WTC11 (cell line): ENCODE measurements at regions of chr6 and their contacts with region 1.

Region 1: GRCh38 chr6:124795643-124796463 is 166.4 kb upstream of the RNF217 start:
- DNase-seq: peak; percentile 53
- ATAC-seq: peak; percentile 90
- H3K4me3 Mint-ChIP-seq: no peak overlapping the region
- H3K27ac Mint-ChIP-seq: no peak overlapping the region
- H3K4me1 Mint-ChIP-seq: peaks cover 12% of the 10 kb centered on the region
- H3K27me3 Mint-ChIP-seq: no peaks in the 10 kb centered on the region
- CTCF ChIP-seq: peak; percentile 45; the same call in 1 of the 2 replicates

Region 2: GRCh38 chr6:123849406-123849805 is 946.4 kb before region 1 on chr6:
- CTCF ChIA-PET with region 1: interaction called, 10 read pairs
- POLR2A ChIA-PET with region 1: no interaction called
- DNase-seq: no peak
- ATAC-seq: no peak
- H3K4me3 Mint-ChIP-seq: no peak overlapping the region
- H3K27ac Mint-ChIP-seq: no peak overlapping the region
- H3K4me1 Mint-ChIP-seq: no peaks in the 10 kb centered on the region
- H3K27me3 Mint-ChIP-seq: no peaks in the 10 kb centered on the region
- CTCF ChIP-seq: no peak